ENCODE measurements at regions of chr11 and their contacts with region 1.

Region 1: DNA sequence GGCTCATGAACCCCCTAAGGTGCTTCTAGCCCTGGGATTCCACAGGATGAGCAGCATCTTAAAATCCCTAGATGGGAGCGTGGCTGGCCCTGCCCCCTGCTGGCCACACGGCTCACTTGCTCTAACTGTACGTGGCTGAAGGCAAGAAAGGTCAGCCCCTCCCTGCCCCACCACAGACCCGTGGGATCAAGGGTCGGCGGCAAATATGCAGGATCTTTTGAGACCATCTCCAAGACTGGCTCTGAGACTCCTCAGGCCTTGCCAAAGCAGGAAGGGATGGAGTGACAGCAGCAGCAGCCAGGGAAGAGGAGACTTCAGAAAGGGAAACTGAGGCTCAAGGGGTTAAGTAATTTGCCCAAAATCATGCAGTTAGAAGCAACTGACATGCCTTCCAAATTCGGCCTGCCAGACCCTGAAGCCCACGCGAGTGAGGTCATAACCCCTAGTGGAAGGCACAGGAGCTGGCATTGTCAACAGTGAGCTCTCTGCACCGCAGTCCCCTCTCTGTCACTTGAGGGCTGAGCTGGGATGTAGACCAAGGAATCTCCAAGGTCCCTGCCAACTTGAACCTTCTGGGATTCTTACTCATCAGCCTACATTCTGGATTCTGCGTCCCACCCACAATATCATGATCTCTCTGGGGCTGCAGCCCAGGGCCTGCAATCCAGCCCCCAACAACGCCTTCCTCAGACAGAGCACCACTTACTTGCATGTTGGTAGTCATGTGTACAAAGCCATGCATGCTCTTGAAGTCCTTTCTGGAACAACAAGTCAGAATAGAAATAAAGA is 31.4 kb downstream of the CREB3L1 start:
- DNase-seq: peak; percentile 79
- H3K4me3 ChIP-seq: no peak overlapping the region
- H3K27ac ChIP-seq: peak overlapping the region; percentile 61
- H3K4me1 ChIP-seq: peaks cover 20% of the 10 kb centered on the region
- H3K27me3 ChIP-seq: no peaks in the 10 kb centered on the region

Region 2: DNA sequence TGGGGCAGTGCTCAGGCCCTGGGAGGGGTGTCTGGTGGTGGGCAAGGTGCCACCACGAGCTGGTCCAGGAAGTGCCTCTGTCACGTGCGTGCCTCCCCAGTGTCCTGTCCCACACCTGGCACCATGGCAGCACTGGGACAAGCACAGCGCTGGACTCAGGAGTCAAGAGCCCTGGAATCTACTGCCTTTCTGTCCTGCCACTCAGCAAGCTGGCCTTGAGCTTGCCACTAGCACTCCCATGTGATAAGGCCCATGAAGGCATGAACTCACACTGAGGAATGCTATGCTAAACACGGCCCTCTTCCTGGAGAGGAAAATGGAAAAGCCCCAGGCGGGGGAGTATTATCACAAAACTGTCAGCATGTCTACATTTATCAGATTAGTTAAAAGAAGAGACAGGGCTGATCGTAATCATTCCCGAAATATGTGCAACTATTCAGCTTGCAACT is 554.5 kb before region 1 on chr11:
- in situ Hi-C with region 1: no loop called
- DNase-seq: no peak
- H3K4me3 ChIP-seq: no peak overlapping the region
- H3K27ac ChIP-seq: no peak overlapping the region
- H3K4me1 ChIP-seq: no peaks in the 10 kb centered on the region
- H3K27me3 ChIP-seq: peaks cover 57% of the 10 kb centered on the region

Region 3: GRCh38 chr11:46242916-46243795 is 65.7 kb before region 1 on chr11:
- in situ Hi-C with region 1: loop called (anchors 5 kb)
- DNase-seq: peak; percentile 96
- H3K4me3 ChIP-seq: peak overlapping the region; percentile 69
- H3K27ac ChIP-seq: peak overlapping the region; percentile 98
- H3K4me1 ChIP-seq: peaks cover 54% of the 10 kb centered on the region
- H3K27me3 ChIP-seq: no peaks in the 10 kb centered on the region